K562 (cell line): ENCODE measurements at regions of chr9 and their contacts with region 1.

Region 1: DNA sequence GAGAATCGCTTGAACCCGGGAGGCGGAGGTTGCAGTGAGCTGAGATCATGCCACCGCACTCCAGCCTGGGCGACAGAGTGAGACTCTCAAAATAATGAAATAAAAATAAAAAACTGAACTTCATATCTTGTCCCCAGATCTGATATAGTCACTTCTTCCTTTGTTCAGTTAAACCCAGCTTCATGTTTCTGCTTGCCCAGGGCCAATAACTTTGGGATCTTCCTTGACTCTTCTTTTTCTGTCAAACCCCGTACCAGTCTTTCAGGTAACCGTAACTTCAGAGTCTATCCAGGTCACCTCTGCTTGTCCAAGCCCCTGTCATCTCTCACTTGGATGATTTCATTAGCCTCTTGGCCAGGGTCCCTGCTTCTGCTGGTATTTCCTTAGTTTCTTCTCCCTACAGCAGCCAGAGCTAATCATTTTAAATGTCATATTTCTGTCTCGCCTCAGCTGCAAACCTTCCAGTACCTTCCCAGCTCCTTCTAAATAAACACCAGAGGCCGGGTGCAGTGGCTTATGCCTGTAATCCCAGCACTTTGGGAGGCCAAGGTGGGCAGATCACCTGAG is 19.7 kb upstream of the ABL1 start:
- DNase-seq: peak in 2 of 4 experiments; percentile 31 to 47
- ATAC-seq: peak; percentile 3; the same call in 2 of the 3 replicates
- H3K4me3 ChIP-seq: no peak overlapping the region
- H3K27ac ChIP-seq: no peak overlapping the region
- H3K4me1 ChIP-seq: no peaks in the 10 kb centered on the region
- H3K27me3 ChIP-seq: no peaks in the 10 kb centered on the region
- CTCF ChIP-seq: no peak
- EP300 ChIP-seq: no peak
- POLR2A ChIP-seq: no peak
- RAD21 ChIP-seq: no peak

Region 2: GRCh38 chr9:130794923-130795495 is 20.3 kb before region 1 on chr9:
- CTCF ChIA-PET with region 1: no interaction called
- POLR2A ChIA-PET with region 1: interaction called, 13 read pairs
- in situ Hi-C with region 1: no loop called
- intact Hi-C with region 1: no loop called
- DNase-seq: no peak
- ATAC-seq: no peak
- H3K4me3 ChIP-seq: no peak overlapping the region
- H3K27ac ChIP-seq: no peak overlapping the region
- H3K4me1 ChIP-seq: no peaks in the 10 kb centered on the region
- H3K27me3 ChIP-seq: no peaks in the 10 kb centered on the region
- CTCF ChIP-seq: no peak
- EP300 ChIP-seq: no peak
- POLR2A ChIP-seq: no peak
- RAD21 ChIP-seq: no peak

Region 3: DNA sequence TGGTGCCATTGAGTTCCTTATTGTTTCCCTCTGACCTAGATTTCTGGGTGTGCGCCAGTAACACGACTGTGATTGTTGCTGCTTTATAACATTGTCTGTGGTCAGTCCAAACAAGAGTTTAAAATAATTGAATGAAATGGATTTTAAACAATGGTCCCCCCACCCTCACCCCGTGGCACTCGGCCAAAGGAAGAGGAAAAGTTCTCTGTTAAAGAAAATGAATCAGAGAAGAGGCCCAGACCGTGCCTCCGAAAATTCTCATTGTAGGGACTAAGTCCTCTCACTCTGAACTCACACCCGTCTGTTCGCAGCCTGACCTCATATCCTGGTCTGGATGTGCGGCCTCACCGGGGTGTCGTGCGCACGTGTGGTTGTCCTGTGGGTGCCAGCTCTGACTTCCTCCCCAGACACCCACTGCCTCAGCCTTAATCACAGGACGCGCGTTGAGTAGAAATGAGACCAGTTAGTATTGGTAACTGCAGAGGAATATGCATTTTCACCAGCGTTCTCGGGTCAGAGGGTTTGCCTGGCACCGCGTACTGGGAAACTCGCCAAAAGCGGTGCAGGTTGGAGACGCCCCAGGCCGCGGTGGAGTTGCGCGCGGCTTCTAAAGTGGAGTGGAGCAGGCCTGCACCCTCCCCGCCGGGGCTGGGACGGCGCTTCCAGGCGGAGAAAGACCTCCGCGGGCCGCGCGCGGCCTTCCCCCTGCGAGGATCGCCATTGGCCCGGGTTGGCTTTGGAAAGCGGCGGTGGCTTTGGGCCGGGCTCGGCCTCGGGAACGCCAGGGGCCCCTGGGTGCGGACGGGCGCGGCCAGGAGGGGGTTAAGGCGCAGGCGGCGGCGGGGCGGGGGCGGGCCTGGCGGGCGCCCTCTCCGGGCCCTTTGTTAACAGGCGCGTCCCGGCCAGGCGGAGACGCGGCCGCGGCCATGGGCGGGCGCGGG is 19.3 kb after region 1 on chr9 and contains the start of gene ABL1:
- CTCF ChIA-PET with region 1: no interaction called
- POLR2A ChIA-PET with region 1: interaction called, 19 read pairs
- in situ Hi-C with region 1: no loop called
- intact Hi-C with region 1: no loop called
- DNase-seq: peak; percentile 70 to 94 (median 90)
- ATAC-seq: peak; percentile 63
- H3K4me3 ChIP-seq: peak within 1 kb of the TSS; percentile 17
- H3K27ac ChIP-seq: no peak within 1 kb of the TSS
- H3K4me1 ChIP-seq: peaks cover 0 to 11% of the 10 kb centered on the region in 2 experiments; a peak in 2 of 5 replicates
- H3K27me3 ChIP-seq: no peaks in the 10 kb centered on the region
- CTCF ChIP-seq: no peak
- EP300 ChIP-seq: no peak
- POLR2A ChIP-seq: no peak
- RAD21 ChIP-seq: no peak
- polyA plus RNA-seq, gene ABL1: 1.5 to 1.6 TPM

Region 4: GRCh38 chr9:130842545-130842944 is 27.2 kb after region 1 on chr9:
- CTCF ChIA-PET with region 1: no interaction called
- POLR2A ChIA-PET with region 1: interaction called, 125 read pairs
- in situ Hi-C with region 1: no loop called
- intact Hi-C with region 1: no loop called
- DNase-seq: peak in 1 of 4 experiments; percentile 37
- ATAC-seq: no peak
- H3K4me3 ChIP-seq: no peak overlapping the region
- H3K27ac ChIP-seq: no peak overlapping the region
- H3K4me1 ChIP-seq: peaks cover 26 to 29% of the 10 kb centered on the region in 2 experiments
- H3K27me3 ChIP-seq: no peaks in the 10 kb centered on the region
- CTCF ChIP-seq: no peak
- EP300 ChIP-seq: no peak
- POLR2A ChIP-seq: no peak
- RAD21 ChIP-seq: no peak